Adrenal gland (tissue), 19 donors: ENCODE measurements at regions of chr5 and their contacts with region 1.

Region 1: GRCh38 chr5:149731639-149732323 is 1.7 kb downstream of the PPARGC1B start:
- DNase-seq: peak; percentile 83 to 93 (median 89)
- H3K4me3 ChIP-seq: peak overlapping the region; percentile 10 to 98 (median 68)
- H3K27ac ChIP-seq: peak overlapping the region in 4 of 5 donors; percentile 38 to 84 (median 76)
- H3K4me1 ChIP-seq: peaks cover 0 to 8% of the 10 kb centered on the region in 2 donors
- H3K27me3 ChIP-seq: no peaks in the 10 kb centered on the region
- CTCF ChIP-seq: peak in 1 of 6 experiments; percentile 8
- POLR2A ChIP-seq: peak; percentile 22 to 70

Region 2: DNA sequence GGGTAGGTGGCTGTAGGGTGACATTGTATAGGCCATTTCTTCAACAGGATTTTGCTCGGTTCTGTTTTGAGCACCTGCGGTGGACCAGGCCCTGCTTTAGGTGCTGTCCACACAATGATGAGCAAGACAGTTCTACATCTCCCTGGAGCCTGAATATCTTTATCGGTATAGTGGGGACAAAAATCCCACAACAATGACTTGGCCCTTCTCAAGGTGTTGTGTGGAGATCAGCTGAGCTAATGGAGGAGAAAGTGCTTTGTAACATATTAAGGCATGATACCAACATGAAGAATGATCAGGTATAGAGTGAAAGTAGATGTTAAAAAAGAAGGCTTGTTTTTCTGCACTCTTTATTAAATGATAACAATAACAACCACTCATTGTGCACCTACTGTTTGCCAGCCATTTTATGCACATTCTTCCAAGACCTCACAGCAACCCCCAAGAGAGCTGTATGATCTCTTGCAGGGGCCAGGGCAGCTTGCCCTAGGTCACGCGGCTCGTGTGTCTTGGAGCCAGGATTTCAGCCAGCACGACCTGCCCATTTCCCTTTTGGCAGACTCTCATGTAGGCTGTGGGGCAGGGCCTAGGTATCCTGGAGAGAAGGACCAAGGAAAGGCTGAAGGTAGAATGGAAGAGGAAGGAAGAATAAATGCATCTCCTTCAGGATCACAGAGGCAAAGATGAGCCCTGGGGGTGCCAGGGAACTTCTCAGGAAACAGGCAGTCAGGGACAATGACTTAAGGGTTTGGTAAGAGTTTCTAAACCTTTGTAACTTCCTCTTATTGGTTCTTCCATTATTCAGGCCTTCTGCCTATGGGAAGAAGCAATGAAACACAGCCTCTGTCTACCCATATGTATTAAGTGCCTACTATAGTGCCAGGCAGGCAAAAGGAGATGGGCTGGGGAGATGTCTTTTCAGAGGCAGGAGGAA is 51.6 kb before region 1 on chr5:
- intact Hi-C with region 1: loop called in 1 of 2 experiments (anchors 10 kb)
- DNase-seq: no peak
- H3K4me3 ChIP-seq: no peak overlapping the region
- H3K27ac ChIP-seq: peak overlapping the region in 1 of 5 donors; percentile 23
- H3K4me1 ChIP-seq: peaks cover 0 to 4% of the 10 kb centered on the region in 2 donors
- H3K27me3 ChIP-seq: no peaks in the 10 kb centered on the region
- CTCF ChIP-seq: no peak
- POLR2A ChIP-seq: no peak

Region 3: DNA sequence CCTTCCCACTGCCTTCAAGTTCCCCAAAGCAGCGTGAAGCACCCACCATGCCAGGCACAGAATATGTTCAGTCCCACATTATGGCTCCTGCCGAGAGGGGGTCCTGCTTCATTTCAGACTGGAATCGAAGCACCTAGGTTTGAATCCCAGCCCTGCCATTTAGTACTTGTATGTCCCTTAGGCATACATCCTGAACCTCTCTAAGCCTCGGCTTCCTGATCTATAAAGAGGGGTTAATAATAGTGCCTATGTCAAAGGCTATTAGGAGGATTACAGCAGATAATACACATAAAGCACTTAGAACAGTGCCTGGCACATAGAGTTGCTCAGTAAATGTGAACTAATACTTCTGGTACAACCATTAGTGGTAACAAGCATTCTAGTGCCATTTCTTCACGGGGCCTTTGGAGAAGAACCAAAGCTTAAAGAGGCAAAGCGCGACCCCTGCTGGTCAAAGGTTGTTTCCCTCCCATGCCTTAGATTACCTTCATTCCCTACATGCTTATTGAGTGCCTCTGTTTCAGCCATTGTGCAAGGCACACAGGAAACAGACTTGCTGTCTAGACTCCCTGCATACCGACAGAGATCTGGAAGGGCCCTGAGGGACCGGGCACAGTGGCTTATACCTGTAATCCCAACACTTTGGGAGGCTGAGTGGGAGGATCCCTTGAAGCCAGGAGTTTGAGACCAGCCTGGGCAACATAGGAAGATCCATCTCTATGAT is 96.5 kb after region 1 on chr5:
- intact Hi-C with region 1: loop called in 1 of 2 experiments (anchors 10 kb)
- DNase-seq: peak; percentile 82 to 97 (median 92)
- H3K4me3 ChIP-seq: no peak overlapping the region
- H3K27ac ChIP-seq: no peak overlapping the region
- H3K4me1 ChIP-seq: no peaks in the 10 kb centered on the region
- H3K27me3 ChIP-seq: no peaks in the 10 kb centered on the region
- CTCF ChIP-seq: peak; percentile 88 to 95 (median 94)
- POLR2A ChIP-seq: no peak